ENCODE measurements at regions of chr20 and their contacts with region 1.

Region 1: GRCh38 chr20:45052698-45053429 is 48.1 kb downstream of the KCNS1 start:
- H3K4me3 ChIP-seq: no peak overlapping the region
- H3K27ac ChIP-seq: no peak overlapping the region
- H3K4me1 ChIP-seq: 0 out of 2 replicates have a peak, but pooled peaks cover 3% of the 10 kb centered on the region
- CTCF ChIP-seq: no peak

Region 2: GRCh38 chr20:44810391-44811149 is 242.3 kb before region 1 on chr20 and contains the start of gene RIMS4:
- CTCF ChIA-PET with region 1: no interaction called
- POLR2A ChIA-PET with region 1: no interaction called
- H3K4me3 ChIP-seq: peak within 1 kb of the TSS; percentile 38
- H3K27ac ChIP-seq: no peak within 1 kb of the TSS
- H3K4me1 ChIP-seq: no peaks in the 10 kb centered on the region
- CTCF ChIP-seq: no peak

Region 3: DNA sequence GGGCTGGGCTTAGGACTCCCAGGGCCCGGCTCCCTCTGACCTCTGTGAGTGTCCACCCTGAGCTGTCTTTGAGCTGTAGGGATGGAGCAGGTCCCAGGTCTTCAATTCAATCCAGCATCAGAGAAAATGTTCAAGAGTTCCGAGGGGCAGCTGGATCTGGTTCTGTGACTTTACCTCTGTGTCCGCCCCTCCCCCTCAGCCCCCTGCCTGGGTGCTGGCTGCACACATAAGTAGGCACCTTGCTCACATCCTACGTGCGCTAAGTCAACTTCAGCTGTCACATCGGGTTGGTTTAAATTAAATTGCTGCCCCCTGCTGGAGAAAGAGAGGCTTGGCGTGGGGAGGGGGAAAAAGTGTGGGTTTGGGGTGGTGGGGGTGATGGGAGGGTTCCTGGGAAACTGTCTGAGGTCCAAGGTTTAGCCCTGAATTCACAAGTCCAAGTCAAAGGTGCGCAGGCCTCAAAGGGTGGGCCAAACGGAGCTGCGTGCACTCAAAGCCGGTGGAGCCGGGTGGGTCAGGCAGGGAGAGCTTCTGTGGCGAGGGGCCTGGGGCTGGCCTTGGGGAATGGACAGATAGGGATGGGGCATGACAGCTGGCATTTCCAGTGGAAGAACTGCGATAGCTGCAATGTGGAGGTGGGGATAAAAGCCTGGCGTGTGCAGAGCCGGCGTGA is 59.1 kb after region 1 on chr20:
- CTCF ChIA-PET with region 1: interaction called, 15 read pairs
- POLR2A ChIA-PET with region 1: no interaction called
- H3K4me3 ChIP-seq: no peak overlapping the region
- H3K27ac ChIP-seq: no peak overlapping the region
- H3K4me1 ChIP-seq: no peaks in the 10 kb centered on the region
- CTCF ChIP-seq: no peak

Region 4: DNA sequence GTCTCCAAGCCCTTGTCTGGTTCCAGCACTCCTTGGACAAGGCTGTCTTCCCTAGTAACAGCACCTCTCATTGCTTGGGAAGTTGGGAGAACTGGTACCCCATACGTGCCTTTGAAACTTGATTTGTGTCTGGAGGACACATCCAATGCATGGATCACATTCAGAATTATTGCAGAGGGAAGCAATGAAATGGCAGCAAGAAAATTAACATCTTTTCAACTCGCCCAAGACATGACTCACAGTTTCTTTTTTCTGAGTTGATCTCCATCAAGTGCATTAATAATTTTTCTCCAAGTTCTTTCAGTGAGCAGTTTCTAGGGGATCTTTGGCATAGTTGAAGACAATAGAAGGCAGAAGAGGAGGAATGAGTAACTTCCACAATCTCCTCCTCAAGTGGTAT is 99.5 kb after region 1 on chr20:
- CTCF ChIA-PET with region 1: no interaction called
- POLR2A ChIA-PET with region 1: no interaction called
- H3K4me3 ChIP-seq: no peak overlapping the region
- H3K27ac ChIP-seq: no peak overlapping the region
- H3K4me1 ChIP-seq: no peaks in the 10 kb centered on the region
- CTCF ChIP-seq: no peak

Region 5: GRCh38 chr20:45341939-45342859 is 289.3 kb after region 1 on chr20:
- CTCF ChIA-PET with region 1: no interaction called
- POLR2A ChIA-PET with region 1: no interaction called
- H3K4me3 ChIP-seq: peak overlapping the region; percentile 3
- H3K27ac ChIP-seq: peak overlapping the region; percentile 59
- H3K4me1 ChIP-seq: peaks cover 37% of the 10 kb centered on the region
- CTCF ChIP-seq: no peak